ENCODE measurements at regions of chr3 and their contacts with region 1.

Region 1: DNA sequence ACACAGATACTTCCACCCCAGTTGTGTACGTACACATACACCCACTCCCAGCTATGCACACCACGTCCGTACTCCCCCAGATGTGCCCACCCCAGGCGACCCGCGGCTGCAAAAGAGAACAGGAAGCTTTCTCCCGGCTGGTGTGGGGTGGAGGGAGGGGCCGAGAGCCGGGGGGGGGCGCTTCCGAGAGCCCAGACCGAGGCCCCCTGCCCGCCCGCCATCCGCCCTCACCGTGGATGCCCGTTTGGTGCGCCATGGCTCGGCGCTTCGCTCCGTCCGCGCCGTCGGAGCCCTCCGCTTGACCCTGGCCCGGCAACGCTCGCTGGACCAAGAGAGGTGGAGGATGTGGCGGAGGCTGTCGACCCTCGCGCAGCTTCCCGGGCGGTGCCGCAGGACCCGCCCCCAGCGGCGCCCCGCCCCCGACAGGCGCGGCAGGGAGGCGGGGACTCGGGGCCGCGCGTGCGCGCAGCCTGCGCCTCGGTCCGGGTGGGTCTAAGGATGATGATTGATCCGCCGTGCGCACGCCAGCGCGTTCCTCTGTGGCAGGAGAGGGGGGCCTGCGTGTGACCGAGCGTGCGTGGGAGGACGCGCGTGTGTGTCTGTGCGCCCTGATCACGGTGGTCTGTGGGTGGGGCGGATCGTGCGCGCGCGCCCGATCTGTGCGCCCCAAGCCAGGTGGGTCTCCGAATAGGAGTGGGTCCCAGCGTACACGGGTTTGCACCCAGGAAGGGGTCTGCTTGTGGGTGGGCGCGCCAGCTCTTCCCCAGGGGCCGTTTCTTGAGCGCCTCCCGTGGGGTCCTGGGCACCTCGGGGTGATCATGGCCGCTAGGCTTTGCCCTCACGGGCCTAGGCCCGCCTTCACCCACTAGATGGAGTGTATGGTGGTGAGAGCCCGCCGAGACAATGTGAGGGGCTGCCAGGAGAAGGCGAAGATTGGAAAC is at the start of gene TWF2:
- DNase-seq: peak; percentile 84
- H3K4me3 ChIP-seq: peak within 1 kb of the TSS; percentile 95
- H3K27ac ChIP-seq: peak within 1 kb of the TSS; percentile 91
- H3K4me1 ChIP-seq: peaks cover 11% of the 10 kb centered on the region
- H3K27me3 ChIP-seq: no peaks in the 10 kb centered on the region
- CTCF ChIP-seq: peak; percentile 47
- total RNA-seq, gene TWF2: 44.2 to 45.0 TPM

Region 2: GRCh38 chr3:52270252-52270754 is 31.3 kb after region 1 on chr3:
- intact Hi-C with region 1: loop called (anchors 5 kb)
- DNase-seq: no peak
- H3K4me3 ChIP-seq: no peak overlapping the region
- H3K27ac ChIP-seq: peak overlapping the region; percentile 62
- H3K4me1 ChIP-seq: no peaks in the 10 kb centered on the region
- H3K27me3 ChIP-seq: no peaks in the 10 kb centered on the region
- CTCF ChIP-seq: no peak

Region 3: GRCh38 chr3:52299879-52300611 is 61.0 kb after region 1 on chr3:
- intact Hi-C with region 1: no loop called
- DNase-seq: no peak
- H3K4me3 ChIP-seq: no peak overlapping the region
- H3K27ac ChIP-seq: no peak overlapping the region
- H3K4me1 ChIP-seq: peaks cover 2% of the 10 kb centered on the region
- H3K27me3 ChIP-seq: no peaks in the 10 kb centered on the region
- CTCF ChIP-seq: no peak

Measured in colonic mucosa (tissue), 4 donors.